A549 (cell line): ENCODE measurements at regions of chr16 and their contacts with region 1.

Region 1: DNA sequence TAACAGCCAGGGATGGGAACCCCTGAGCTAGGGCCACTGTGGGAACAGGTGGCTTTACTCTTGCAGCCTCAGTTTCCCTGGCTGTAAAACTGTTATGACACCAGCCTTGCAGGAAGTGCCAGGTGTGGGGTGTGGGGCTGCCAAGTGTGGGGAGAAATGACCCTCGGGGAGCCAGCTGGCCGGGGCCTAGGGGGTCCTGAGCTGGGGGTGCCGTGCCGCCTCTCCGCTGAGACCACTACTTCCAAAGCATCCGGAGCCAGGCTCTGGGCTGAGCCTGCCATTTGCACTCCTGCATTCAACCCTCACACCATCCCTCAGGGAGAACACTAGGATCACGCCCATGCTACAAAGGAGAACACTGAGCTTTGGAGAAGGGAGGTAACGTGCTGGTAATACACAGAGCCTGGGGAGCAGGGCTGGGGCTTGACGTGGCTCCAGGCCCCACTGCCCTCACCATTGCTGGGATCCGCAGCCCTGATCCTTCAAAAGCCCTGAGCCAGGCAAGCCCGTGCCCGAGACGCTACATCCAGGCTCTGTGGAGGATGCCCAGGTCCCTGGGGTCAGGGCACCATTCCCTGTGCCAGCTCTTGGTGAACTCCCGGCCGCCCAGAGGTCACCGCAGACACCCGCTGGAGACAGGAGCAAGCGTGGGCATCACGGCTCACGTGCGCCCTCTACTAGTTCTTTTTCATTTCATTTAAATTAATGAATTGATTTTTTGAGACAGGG is 28.8 kb upstream of the GINS2 start:
- DNase-seq: peak; percentile 74 to 76
- ATAC-seq: peak; percentile 77 to 84
- H3K4me3 ChIP-seq: no peak overlapping the region
- H3K27ac ChIP-seq: no peak overlapping the region
- H3K4me1 ChIP-seq: no peaks in the 10 kb centered on the region
- CTCF ChIP-seq: peak; percentile 85
- EP300 ChIP-seq: no peak
- POLR2A ChIP-seq: no peak
- RAD21 ChIP-seq: peak; percentile 80 to 82

Region 2: DNA sequence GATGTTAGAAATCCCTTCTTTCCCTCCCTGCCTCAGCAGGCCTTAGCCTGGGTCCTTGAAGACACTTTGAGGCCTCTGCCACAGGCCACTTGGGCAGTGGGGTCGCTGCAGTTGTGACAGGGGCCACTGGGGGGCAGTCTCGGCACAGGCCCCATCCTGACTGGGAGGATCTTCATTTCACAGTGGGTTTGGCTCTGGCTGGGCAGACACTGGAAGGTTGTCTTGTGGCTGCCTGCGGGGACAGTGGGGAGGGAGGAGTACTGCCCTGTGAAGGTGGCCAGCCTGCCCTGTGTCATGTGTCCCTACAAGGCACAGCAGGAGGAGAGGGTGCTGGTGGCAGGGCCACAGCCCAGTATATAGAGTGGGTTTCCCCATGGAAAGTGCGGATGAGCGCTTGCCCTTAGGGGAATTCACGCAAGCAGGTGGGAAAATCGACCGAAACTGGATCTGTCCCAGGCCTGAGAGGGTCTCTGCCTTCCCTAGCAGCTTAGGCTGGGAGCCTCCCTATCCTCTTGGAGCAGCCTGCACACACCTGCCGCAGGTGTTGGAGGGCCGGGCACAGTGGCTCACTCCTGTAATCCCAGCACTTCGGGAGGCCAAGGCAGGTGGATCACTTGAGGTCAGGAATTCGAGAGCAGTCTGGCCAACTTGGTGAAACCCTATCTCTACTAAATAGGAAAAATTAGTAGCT is 57.6 kb before region 1 on chr16:
- CTCF ChIA-PET with region 1: interaction called, 41 read pairs
- POLR2A ChIA-PET with region 1: no interaction called
- DNase-seq: peak; percentile 58 to 88
- ATAC-seq: peak; percentile 76 to 87
- H3K4me3 ChIP-seq: no peak overlapping the region
- H3K27ac ChIP-seq: no peak overlapping the region
- H3K4me1 ChIP-seq: no peaks in the 10 kb centered on the region
- CTCF ChIP-seq: peak; percentile 72
- EP300 ChIP-seq: no peak
- POLR2A ChIP-seq: no peak
- RAD21 ChIP-seq: peak; percentile 43 to 61; a peak in 3 of 5 replicates

Region 3: DNA sequence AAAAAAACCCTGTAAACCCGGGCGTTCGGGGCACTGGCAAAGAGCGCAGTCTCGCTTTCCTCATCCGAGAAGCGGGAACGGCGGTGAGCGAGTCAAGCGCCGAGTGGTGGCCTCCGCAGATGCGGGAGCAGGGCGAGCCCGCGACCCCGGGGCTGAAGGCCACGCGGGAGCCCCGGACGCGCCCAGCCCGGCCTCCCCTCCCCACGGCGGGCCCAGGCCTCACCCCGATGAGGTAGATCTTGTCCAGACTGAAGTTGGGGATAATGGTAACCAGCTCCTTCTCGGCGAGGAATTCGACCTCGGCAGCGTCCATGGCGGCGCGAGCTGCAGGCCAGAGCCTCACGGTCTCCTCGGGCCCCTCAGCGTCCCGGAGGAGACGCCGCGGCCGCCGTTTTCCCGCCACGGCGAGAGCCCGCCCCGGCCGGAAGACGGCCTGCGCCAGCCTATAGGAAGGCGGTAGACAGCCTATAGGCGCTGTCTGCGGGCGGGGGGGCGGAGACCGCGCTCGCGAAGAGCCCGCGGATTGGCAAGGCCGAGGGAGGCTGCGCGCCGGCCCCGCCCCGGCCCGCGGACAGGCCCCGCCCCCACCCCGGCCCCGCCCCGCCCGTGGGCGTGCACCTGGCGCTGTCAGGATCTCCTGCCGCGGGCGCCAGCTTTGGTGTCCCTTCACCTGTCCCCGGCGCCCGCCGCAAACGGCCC is 28.8 kb before region 1 on chr16 and contains the start of gene GINS2:
- CTCF ChIA-PET with region 1: interaction called, 13 read pairs
- POLR2A ChIA-PET with region 1: no interaction called
- DNase-seq: peak; percentile 91 to 97
- ATAC-seq: peak; percentile 99
- H3K4me3 ChIP-seq: peak within 1 kb of the TSS; percentile 81
- H3K27ac ChIP-seq: peak within 1 kb of the TSS; percentile 63 to 84
- H3K4me1 ChIP-seq: peaks cover 9% of the 10 kb centered on the region; the same call in 1 of the 3 replicates
- CTCF ChIP-seq: no peak
- EP300 ChIP-seq: no peak
- POLR2A ChIP-seq: no peak
- RAD21 ChIP-seq: no peak
- polyA plus RNA-seq, gene GINS2: 23.4 and 28.7 TPM in 2 replicates

Region 4: GRCh38 chr16:85746008-85746781 is 28.6 kb after region 1 on chr16:
- CTCF ChIA-PET with region 1: interaction called, 41 read pairs
- POLR2A ChIA-PET with region 1: no interaction called
- DNase-seq: peak; percentile 51 to 59
- ATAC-seq: peak; percentile 40 to 48; a peak in 4 of 6 replicates
- H3K4me3 ChIP-seq: no peak overlapping the region
- H3K27ac ChIP-seq: peak overlapping the region; percentile 21 to 81
- H3K4me1 ChIP-seq: peaks cover 26% of the 10 kb centered on the region
- CTCF ChIP-seq: no peak
- EP300 ChIP-seq: no peak
- POLR2A ChIP-seq: no peak
- RAD21 ChIP-seq: no peak